Heart right ventricle (tissue), 16 donors: ENCODE measurements at regions of chr6 and their contacts with region 1.

Region 1: GRCh38 chr6:33391278-33391921 is at the start of gene KIFC1:
- DNase-seq: peak; percentile 99
- ATAC-seq: peak; percentile 98 to 99 (median 98)
- H3K4me3 ChIP-seq: peak within 1 kb of the TSS in 9 of 10 donors; percentile 42 to 76 (median 59)
- H3K27ac ChIP-seq: peak within 1 kb of the TSS; percentile 26 to 93 (median 86)
- H3K4me1 ChIP-seq: peaks cover 6 to 41% (median 9%) of the 10 kb centered on the region in 9 donors
- H3K27me3 ChIP-seq: no peaks in the 10 kb centered on the region
- CTCF ChIP-seq: peak; percentile 91 to 100 (median 99)
- total RNA-seq, gene KIFC1: 0.09 to 6.1 (median 0.36) TPM in 8 of 10 donors, not detected in the others

Region 2: DNA sequence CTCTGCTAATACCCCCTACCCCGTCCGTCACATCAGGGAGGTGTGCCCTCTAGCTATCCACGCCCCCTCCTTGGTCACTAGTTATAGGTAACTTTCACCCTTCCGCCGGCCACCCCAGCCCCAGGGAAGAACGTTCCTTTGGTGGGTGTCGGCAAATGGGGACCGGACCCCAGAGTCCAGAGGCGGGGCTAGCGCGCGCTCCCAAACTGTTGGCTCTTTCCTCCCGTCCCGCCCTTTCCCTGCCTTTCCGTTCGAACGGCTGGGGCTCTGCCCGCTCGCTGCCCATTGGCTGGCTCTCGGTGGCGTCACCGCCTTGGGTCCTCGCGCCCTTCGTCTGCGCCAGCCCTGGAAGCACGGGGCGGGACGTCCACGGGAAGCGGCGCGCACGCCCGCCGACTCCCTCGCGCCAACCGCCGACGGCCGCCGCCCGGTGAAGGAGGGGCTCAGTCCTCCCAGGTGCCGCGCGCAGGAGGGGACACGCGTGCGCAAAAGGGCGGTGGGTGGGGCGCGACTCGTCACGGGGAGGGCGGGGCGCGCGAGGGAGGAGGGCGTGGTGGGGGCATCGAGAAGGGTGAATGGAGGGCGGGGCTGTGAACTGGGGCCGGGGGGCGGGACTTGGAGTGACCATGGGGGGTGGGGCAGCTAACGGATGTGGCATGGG is 18.8 kb after region 1 on chr6:
- intact Hi-C with region 1: loop called in 3 of 10 experiments (anchors 1 to 2 kb)
- DNase-seq: peak; percentile 97 to 99
- ATAC-seq: peak; percentile 90 to 93 (median 91)
- H3K4me3 ChIP-seq: peak overlapping the region; percentile 74 to 100 (median 99)
- H3K27ac ChIP-seq: peak overlapping the region; percentile 93 to 100 (median 99)
- H3K4me1 ChIP-seq: peaks cover 5 to 29% (median 19%) of the 10 kb centered on the region in 9 donors
- H3K27me3 ChIP-seq: no peaks in the 10 kb centered on the region
- CTCF ChIP-seq: no peak

Region 3: GRCh38 chr6:33425668-33426577 is 34.5 kb after region 1 on chr6:
- intact Hi-C with region 1: loop called in 4 of 10 experiments (anchors 1 to 5 kb)
- DNase-seq: peak; percentile 86 to 91
- ATAC-seq: peak; percentile 80 to 87 (median 84)
- H3K4me3 ChIP-seq: peak overlapping the region; percentile 47 to 74 (median 64)
- H3K27ac ChIP-seq: peak overlapping the region; percentile 85 to 97 (median 92)
- H3K4me1 ChIP-seq: peaks cover 15 to 57% (median 46%) of the 10 kb centered on the region in 9 donors
- H3K27me3 ChIP-seq: no peaks in the 10 kb centered on the region
- CTCF ChIP-seq: peak; percentile 20 to 81 (median 70)

Region 4: GRCh38 chr6:33454009-33454946 is 62.9 kb after region 1 on chr6 and contains the start of gene ZBTB9:
- intact Hi-C with region 1: loop called in 1 of 10 experiments (anchors 2 kb)
- DNase-seq: peak; percentile 95 to 96
- ATAC-seq: peak; percentile 99 to 100 (median 99)
- H3K4me3 ChIP-seq: peak within 1 kb of the TSS; percentile 61 to 97 (median 81)
- H3K27ac ChIP-seq: peak within 1 kb of the TSS in 9 of 10 donors; percentile 72 to 90 (median 87)
- H3K4me1 ChIP-seq: peaks cover 4 to 42% (median 17%) of the 10 kb centered on the region in 9 donors
- H3K27me3 ChIP-seq: no peaks in the 10 kb centered on the region
- CTCF ChIP-seq: no peak
- total RNA-seq, gene ZBTB9: 2.7 to 6.5 (median 4.9) TPM

Region 5: DNA sequence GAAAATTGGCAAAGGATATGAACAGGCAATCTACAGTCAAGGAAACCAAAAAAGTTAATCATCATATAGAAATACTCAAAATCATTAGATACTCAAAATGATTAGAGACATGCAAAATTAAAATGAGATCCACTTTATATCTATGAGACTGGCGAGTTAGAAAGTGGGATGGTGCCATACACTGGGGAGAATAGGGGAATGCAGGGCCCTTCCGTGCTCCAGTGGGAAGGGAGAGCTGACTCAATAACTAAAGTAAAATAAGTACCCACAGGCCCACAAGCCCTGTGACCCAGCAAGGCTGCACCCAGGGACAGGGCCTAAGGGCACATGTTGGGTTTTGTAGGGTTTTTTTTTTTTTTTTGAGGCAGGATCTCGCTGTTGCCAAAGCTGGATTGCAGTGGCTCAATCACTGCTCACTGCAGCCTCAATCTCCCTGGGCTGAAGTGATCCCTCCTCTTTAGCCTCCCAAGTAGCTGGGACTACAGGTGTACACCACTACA is 143.8 kb after region 1 on chr6:
- intact Hi-C with region 1: no loop called
- DNase-seq: no peak
- ATAC-seq: no peak
- H3K4me3 ChIP-seq: no peak overlapping the region
- H3K27ac ChIP-seq: no peak overlapping the region
- H3K4me1 ChIP-seq: no peaks in the 10 kb centered on the region
- H3K27me3 ChIP-seq: no peaks in the 10 kb centered on the region
- CTCF ChIP-seq: peak in 5 of 9 donors; percentile 10 to 35 (median 26)

Region 6: GRCh38 chr6:33570806-33571636 is 179.6 kb after region 1 on chr6:
- intact Hi-C with region 1: loop called in 2 of 10 experiments (anchors 1 to 10 kb)
- DNase-seq: peak; percentile 83 to 84
- ATAC-seq: peak; percentile 92 to 98 (median 96)
- H3K4me3 ChIP-seq: peak overlapping the region; percentile 40 to 72 (median 59)
- H3K27ac ChIP-seq: peak overlapping the region; percentile 46 to 94 (median 88)
- H3K4me1 ChIP-seq: peaks cover 5 to 17% (median 9%) of the 10 kb centered on the region in 9 donors
- H3K27me3 ChIP-seq: no peaks in the 10 kb centered on the region
- CTCF ChIP-seq: peak in 3 of 9 donors; percentile 19 to 27 (median 23)